Common myeloid progenitor, CD34-positive (primary cell): ENCODE measurements at regions of chr22 and their contacts with region 1.

Region 1: DNA sequence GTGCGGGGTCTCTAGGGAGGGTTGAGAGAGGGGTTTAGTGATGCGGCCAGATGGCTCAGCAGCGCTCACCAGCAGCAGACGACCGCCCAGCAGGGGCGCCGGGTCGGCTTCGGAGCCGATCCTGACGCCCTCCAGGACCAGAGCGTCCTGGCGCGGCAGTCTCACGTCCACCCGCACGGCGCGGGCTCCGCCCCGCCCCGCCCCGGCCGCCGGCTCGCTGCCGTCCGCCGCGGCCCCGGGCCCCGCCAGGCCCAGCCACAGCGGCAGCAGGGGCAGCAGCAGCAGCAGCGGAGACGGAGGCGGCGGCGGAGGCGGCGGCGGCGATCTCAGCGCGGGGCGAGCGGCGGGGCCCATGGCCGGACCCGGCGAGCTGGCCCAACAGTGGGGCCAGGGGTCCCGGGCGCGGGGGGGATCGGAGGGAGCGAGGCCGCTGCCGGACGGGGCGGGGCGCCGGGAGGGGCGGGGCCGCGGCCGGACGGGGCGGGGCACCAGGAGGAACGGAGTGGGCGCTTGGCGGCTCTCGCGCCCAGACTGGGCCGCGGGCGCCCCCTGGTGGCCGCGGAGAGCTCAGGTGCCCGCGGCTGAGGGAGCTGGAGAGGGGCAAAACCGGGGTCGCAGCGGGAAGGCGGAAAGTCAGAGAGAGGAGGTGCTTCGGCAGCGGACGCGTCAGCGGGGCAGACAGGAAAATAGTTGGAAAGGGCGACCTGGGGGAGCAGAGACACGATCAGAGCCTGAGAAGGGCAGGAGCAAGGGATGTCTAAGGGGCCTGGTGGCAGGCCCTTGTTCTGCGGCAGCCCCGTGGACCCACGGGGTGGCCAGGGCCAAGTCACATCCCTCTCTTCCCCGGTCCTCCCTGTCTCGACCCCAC is at the start of gene RNF215:
- DNase-seq: peak; percentile 74 to 79 (median 78)
- H3K4me3 ChIP-seq: peak within 1 kb of the TSS; percentile 25 to 75 (median 57)
- H3K27ac ChIP-seq: peak within 1 kb of the TSS in 1 of 2 experiments; percentile 34
- H3K4me1 ChIP-seq: peaks cover 2 to 12% (median 11%) of the 10 kb centered on the region in 4 experiments
- H3K27me3 ChIP-seq: no peaks in the 10 kb centered on the region

Region 2: DNA sequence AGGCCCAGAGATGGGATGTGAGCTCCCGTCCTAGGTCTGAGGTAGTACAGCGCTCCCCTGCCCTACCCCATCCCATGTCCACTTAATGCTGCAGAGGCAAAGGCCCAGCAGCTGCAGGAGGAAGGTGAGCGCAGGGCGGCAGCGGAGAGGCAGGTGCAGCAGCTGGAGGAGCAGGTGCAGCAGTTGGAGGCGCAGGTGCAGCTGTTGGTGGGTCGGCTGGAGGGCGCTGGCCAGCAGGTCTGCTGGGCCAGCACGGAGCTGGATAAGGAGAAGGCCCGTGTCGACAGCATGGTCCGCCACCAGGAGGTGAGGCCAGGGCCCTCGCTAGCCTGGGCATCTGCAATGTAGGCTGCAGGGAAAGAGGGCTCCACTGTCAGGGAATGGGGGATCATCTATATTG is 15.2 kb before region 1 on chr22:
- CTCF ChIA-PET with region 1: no interaction called
- POLR2A ChIA-PET with region 1: no interaction called
- DNase-seq: no peak
- H3K4me3 ChIP-seq: no peak overlapping the region
- H3K27ac ChIP-seq: no peak overlapping the region
- H3K4me1 ChIP-seq: peaks cover 0 to 5% (median under 1%) of the 10 kb centered on the region in 4 experiments
- H3K27me3 ChIP-seq: no peaks in the 10 kb centered on the region

Region 3: GRCh38 chr22:30406400-30406799 is 19.2 kb after region 1 on chr22:
- CTCF ChIA-PET with region 1: interaction called, 13 read pairs
- POLR2A ChIA-PET with region 1: no interaction called
- DNase-seq: no peak
- H3K4me3 ChIP-seq: no peak overlapping the region
- H3K27ac ChIP-seq: no peak overlapping the region
- H3K4me1 ChIP-seq: peaks cover 0 to 18% (median 3%) of the 10 kb centered on the region in 4 experiments
- H3K27me3 ChIP-seq: no peaks in the 10 kb centered on the region

Region 4: GRCh38 chr22:30413745-30414524 is 26.7 kb after region 1 on chr22:
- CTCF ChIA-PET with region 1: interaction called, 12 read pairs
- POLR2A ChIA-PET with region 1: no interaction called
- DNase-seq: no peak
- H3K4me3 ChIP-seq: no peak overlapping the region
- H3K27ac ChIP-seq: no peak overlapping the region
- H3K4me1 ChIP-seq: peaks cover 0 to 2% (median under 1%) of the 10 kb centered on the region in 4 experiments
- H3K27me3 ChIP-seq: no peaks in the 10 kb centered on the region

Region 5: GRCh38 chr22:30423982-30424963 is 37.1 kb after region 1 on chr22:
- CTCF ChIA-PET with region 1: interaction called, 13 read pairs
- POLR2A ChIA-PET with region 1: no interaction called
- DNase-seq: peak; percentile 99 to 100 (median 100)
- H3K4me3 ChIP-seq: peak overlapping the region; percentile 54 to 85 (median 75)
- H3K27ac ChIP-seq: peak overlapping the region; percentile 81 to 88
- H3K4me1 ChIP-seq: peaks cover 9 to 44% (median 41%) of the 10 kb centered on the region in 4 experiments
- H3K27me3 ChIP-seq: no peaks in the 10 kb centered on the region

Region 6: GRCh38 chr22:30485362-30485988 is 98.3 kb after region 1 on chr22:
- CTCF ChIA-PET with region 1: interaction called, 43 read pairs
- POLR2A ChIA-PET with region 1: no interaction called
- DNase-seq: peak; percentile 59 to 76 (median 71)
- H3K4me3 ChIP-seq: no peak overlapping the region
- H3K27ac ChIP-seq: no peak overlapping the region
- H3K4me1 ChIP-seq: no peaks in the 10 kb centered on the region
- H3K27me3 ChIP-seq: peaks cover 0 to 5% (median 0%) of the 10 kb centered on the region in 5 experiments